CD8-positive, alpha-beta T cell (primary cell): ENCODE measurements at regions of chr21 and their contacts with region 1.

Region 1: DNA sequence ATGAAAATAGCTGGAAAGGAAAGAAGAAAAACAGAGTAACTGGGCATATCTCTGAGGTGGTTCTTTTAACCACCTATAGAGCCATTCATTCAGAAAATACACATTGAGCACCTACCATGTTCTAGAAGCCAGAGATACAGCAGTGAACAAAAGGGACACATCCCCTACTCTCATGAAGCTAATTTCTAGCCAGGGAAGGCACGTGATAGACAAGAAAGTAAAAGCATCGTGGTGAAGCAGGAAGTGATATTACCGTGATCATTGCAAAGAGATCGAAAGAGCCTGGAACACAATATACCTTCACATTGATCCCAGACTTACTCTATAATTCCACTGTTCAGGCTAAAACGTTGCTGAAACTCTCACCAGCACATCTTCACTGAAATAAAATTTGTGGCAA is 76.0 kb downstream of the TIAM1 start:
- DNase-seq: peak in 2 of 9 experiments; percentile 13 to 43
- ATAC-seq: peak; percentile 67
- H3K4me3 ChIP-seq: peak overlapping the region; percentile 9 to 21
- H3K4me3 Mint-ChIP-seq: peak overlapping the region; percentile 71
- H3K27ac ChIP-seq: peak overlapping the region in 1 of 2 experiments; percentile 15
- H3K27ac Mint-ChIP-seq: peak overlapping the region; percentile 85
- H3K4me1 ChIP-seq: peaks cover 12% of the 10 kb centered on the region
- H3K4me1 Mint-ChIP-seq: peaks cover 41% of the 10 kb centered on the region
- H3K27me3 ChIP-seq: no peaks in the 10 kb centered on the region
- H3K27me3 Mint-ChIP-seq: no peaks in the 10 kb centered on the region
- CTCF ChIP-seq: no peak

Region 2: GRCh38 chr21:31282095-31282709 is 14.1 kb after region 1 on chr21:
- CTCF ChIA-PET with region 1: no interaction called
- POLR2A ChIA-PET with region 1: interaction called, 6 read pairs
- intact Hi-C with region 1: loop called in 1 of 2 experiments (anchors 1 kb)
- DNase-seq: no peak
- ATAC-seq: no peak
- H3K4me3 ChIP-seq: no peak overlapping the region
- H3K4me3 Mint-ChIP-seq: no peak overlapping the region
- H3K27ac ChIP-seq: no peak overlapping the region
- H3K27ac Mint-ChIP-seq: peak overlapping the region; percentile 70
- H3K4me1 ChIP-seq: peaks cover 17% of the 10 kb centered on the region
- H3K4me1 Mint-ChIP-seq: peaks cover 31% of the 10 kb centered on the region
- H3K27me3 ChIP-seq: no peaks in the 10 kb centered on the region
- H3K27me3 Mint-ChIP-seq: no peaks in the 10 kb centered on the region
- CTCF ChIP-seq: no peak

Region 3: GRCh38 chr21:31299291-31300147 is 31.4 kb after region 1 on chr21:
- CTCF ChIA-PET with region 1: no interaction called
- POLR2A ChIA-PET with region 1: no interaction called
- intact Hi-C with region 1: no loop called
- DNase-seq: no peak
- ATAC-seq: no peak
- H3K4me3 ChIP-seq: no peak overlapping the region
- H3K4me3 Mint-ChIP-seq: no peak overlapping the region
- H3K27ac ChIP-seq: no peak overlapping the region
- H3K27ac Mint-ChIP-seq: no peak overlapping the region
- H3K4me1 ChIP-seq: no peaks in the 10 kb centered on the region
- H3K4me1 Mint-ChIP-seq: peaks cover 2% of the 10 kb centered on the region
- H3K27me3 ChIP-seq: no peaks in the 10 kb centered on the region
- H3K27me3 Mint-ChIP-seq: no peaks in the 10 kb centered on the region
- CTCF ChIP-seq: no peak

Region 4: DNA sequence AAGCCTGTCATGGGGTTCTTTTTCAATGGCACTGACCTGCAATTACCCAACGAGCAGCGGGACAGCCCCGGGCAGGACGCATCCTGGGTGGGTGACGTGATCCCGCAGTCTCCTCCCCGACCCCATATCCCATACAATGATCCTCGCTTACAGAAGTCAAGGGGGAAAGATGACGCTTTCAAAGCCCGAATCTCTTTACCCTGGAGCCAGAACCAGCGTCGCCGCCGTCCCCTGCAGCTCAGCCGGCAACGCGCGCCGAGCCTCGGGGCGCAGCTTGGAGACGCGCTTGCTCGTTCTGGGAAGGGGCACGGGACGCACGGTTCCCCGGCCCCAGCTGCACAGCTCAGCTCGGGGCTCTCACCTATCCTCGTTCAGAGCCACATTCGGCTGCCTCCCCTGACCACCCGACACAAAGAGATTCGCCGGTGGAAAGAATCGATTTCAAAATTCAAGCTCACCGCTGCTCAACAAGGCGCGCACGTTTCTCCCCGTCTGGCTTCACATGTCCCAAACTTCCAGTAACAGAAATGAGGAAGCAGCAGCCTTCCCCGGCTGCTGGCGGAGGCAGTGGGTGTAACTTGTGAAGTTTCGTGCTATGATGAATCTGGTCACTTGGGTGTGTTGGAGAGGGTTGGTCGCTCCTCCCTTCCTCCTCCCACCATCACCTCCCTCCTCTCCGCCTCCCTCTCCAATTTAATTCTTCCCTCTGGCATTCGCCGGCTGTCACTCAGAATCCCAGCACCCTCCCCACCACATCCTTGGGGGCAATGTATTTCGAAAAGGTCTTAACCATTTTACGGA is 75.8 kb after region 1 on chr21 and contains the start of gene TIAM1:
- CTCF ChIA-PET with region 1: no interaction called
- POLR2A ChIA-PET with region 1: no interaction called
- intact Hi-C with region 1: no loop called
- DNase-seq: peak in 3 of 9 experiments; percentile 8 to 29 (median 12)
- ATAC-seq: no peak
- H3K4me3 ChIP-seq: peak within 1 kb of the TSS; percentile 49 to 55
- H3K4me3 Mint-ChIP-seq: peak within 1 kb of the TSS; percentile 90
- H3K27ac ChIP-seq: no peak within 1 kb of the TSS
- H3K27ac Mint-ChIP-seq: peak within 1 kb of the TSS; percentile 67
- H3K4me1 ChIP-seq: peaks cover 15% of the 10 kb centered on the region
- H3K4me1 Mint-ChIP-seq: peaks cover 35% of the 10 kb centered on the region
- H3K27me3 ChIP-seq: no peaks in the 10 kb centered on the region
- H3K27me3 Mint-ChIP-seq: peaks cover 17% of the 10 kb centered on the region
- CTCF ChIP-seq: no peak
- total RNA-seq, gene TIAM1: 8.0 to 8.5 TPM